ENCODE measurements at regions of chr2 and their contacts with region 1.

Region 1: DNA sequence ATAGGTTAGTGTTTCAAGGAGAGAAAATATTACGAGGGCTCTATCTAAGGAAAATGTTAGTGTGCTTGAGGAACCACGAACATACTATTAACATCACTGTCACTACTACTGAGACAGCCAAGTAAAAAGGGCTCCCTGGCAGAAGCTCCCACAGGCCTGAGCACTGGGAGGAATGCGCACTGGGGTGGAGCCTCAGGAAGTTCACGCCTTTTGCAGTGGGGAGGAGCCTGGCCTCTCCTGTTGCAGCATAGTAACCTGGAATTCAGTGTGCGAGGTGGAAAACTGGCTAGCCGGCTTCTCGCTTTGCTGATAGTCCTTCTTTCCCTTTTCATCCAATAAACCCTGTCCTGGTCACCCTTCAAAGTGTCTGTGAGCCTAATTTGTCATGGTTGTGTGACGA is 250.3 kb downstream of the ERBB4 start:
- DNase-seq: no peak
- ATAC-seq: no peak
- H3K4me3 ChIP-seq: no peak overlapping the region
- H3K27ac ChIP-seq: no peak overlapping the region
- H3K4me1 ChIP-seq: no peaks in the 10 kb centered on the region
- H3K27me3 ChIP-seq: no peaks in the 10 kb centered on the region
- CTCF ChIP-seq: no peak
- POLR2A ChIP-seq: no peak
- RAD21 ChIP-seq: no peak

Region 2: DNA sequence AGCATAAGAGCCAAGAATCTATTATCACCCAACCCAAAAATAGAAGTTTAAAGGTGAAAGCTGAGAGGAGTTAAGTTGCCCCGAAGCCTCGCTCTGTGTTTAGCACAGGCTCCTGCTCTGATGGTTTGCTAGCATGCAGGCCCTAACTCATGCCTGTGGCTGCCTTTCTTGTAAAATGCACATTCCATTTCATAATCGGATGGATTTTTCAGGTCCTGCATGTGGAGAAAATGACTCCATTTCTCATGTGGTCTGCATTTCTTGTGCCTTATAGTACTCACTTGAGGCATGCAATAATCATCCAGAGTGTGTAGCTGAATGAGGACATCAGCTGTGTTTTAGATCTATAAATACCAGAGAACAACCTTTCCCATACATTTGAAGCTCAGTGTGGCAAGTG is 1350.1 kb before region 1 on chr2:
- CTCF ChIA-PET with region 1: no interaction called
- POLR2A ChIA-PET with region 1: no interaction called
- dilution Hi-C with region 1: no loop called
- in situ Hi-C with region 1: no loop called
- intact Hi-C with region 1: loop called (anchors 5 kb)
- DNase-seq: no peak
- ATAC-seq: no peak
- H3K4me3 ChIP-seq: no peak overlapping the region
- H3K27ac ChIP-seq: no peak overlapping the region
- H3K4me1 ChIP-seq: no peaks in the 10 kb centered on the region
- H3K27me3 ChIP-seq: no peaks in the 10 kb centered on the region
- CTCF ChIP-seq: no peak
- POLR2A ChIP-seq: no peak
- RAD21 ChIP-seq: no peak

Measured in IMR-90 (cell line).